GM12878 (cell line): ENCODE measurements at regions of chr11 and their contacts with region 1.

Region 1: GRCh38 chr11:65274735-65275682 is 13.2 kb downstream of the POLA2 start:
- DNase-seq: no peak
- ATAC-seq: peak; percentile 89
- H3K4me3 ChIP-seq: no peak overlapping the region
- H3K27ac ChIP-seq: no peak overlapping the region
- H3K4me1 ChIP-seq: peaks cover 6% of the 10 kb centered on the region; the same call in 1 of the 2 replicates
- H3K27me3 ChIP-seq: no peaks in the 10 kb centered on the region
- CTCF ChIP-seq: peak; percentile 68 to 94 (median 69)
- EP300 ChIP-seq: no peak
- POLR2A ChIP-seq: no peak
- RAD21 ChIP-seq: peak; percentile 90

Region 2: GRCh38 chr11:65261591-65262380 is 13.2 kb before region 1 on chr11 and contains the start of gene POLA2:
- CTCF ChIA-PET with region 1: interaction called, 30 read pairs
- POLR2A ChIA-PET with region 1: interaction called, 11 read pairs
- RAD21 ChIA-PET with region 1: interaction called, 12 read pairs
- SMC1A ChIA-PET with region 1: interaction called, 9 read pairs
- in situ Hi-C with region 1: no loop called
- intact Hi-C with region 1: no loop called
- DNase-seq: peak; percentile 92
- ATAC-seq: peak; percentile 93
- H3K4me3 ChIP-seq: peak within 1 kb of the TSS; percentile 92
- H3K27ac ChIP-seq: peak within 1 kb of the TSS; percentile 98
- H3K4me1 ChIP-seq: peaks cover 3% of the 10 kb centered on the region
- H3K27me3 ChIP-seq: no peaks in the 10 kb centered on the region
- CTCF ChIP-seq: no peak
- EP300 ChIP-seq: no peak
- POLR2A ChIP-seq: peak; percentile 94
- RAD21 ChIP-seq: no peak
- polyA plus RNA-seq, gene POLA2: 4.2 to 8.7 TPM

Region 3: DNA sequence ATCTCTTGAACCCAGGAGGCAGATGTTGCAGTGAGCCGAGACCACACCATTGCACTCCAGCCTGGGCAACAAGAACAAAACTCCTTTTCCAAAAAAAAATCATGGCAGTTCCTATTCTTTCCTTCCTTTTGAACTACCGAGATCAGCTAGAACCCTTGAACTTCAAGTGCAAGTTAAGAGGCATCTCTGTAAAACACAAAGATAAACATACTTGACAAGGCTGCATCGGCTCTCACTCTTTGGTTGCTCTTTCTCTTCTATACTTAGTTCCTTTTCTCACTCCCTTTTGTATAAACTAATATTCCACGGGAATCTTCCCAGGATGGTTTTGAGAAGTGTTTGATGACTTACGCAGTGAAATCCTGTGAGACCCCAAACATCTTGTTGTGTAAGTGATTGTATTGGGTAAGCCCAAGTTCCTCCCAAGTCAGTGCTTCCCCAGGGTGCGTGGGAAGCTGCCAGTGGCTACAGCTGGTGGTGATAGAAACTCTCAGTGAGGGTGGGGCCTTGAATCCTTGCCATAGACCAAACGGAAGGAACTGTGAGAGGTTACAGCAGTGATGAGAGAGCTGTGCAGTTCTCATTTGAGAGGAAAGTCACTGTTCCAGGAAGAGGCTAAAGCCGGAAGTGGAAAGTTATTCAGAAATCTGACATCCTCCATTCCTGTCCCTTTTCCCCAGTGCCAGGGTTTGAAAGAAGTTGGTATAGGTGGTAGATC is 15.6 kb after region 1 on chr11:
- CTCF ChIA-PET with region 1: interaction called, 67 read pairs
- POLR2A ChIA-PET with region 1: interaction called, 9 read pairs
- RAD21 ChIA-PET with region 1: interaction called, 13 read pairs
- SMC1A ChIA-PET with region 1: interaction called, 19 read pairs
- in situ Hi-C with region 1: no loop called
- intact Hi-C with region 1: no loop called
- DNase-seq: peak; percentile 69
- ATAC-seq: peak; percentile 95
- H3K4me3 ChIP-seq: no peak overlapping the region
- H3K27ac ChIP-seq: peak overlapping the region; percentile 87
- H3K4me1 ChIP-seq: peaks cover 16% of the 10 kb centered on the region
- H3K27me3 ChIP-seq: no peaks in the 10 kb centered on the region
- CTCF ChIP-seq: no peak
- EP300 ChIP-seq: no peak
- POLR2A ChIP-seq: no peak
- RAD21 ChIP-seq: no peak

Region 4: DNA sequence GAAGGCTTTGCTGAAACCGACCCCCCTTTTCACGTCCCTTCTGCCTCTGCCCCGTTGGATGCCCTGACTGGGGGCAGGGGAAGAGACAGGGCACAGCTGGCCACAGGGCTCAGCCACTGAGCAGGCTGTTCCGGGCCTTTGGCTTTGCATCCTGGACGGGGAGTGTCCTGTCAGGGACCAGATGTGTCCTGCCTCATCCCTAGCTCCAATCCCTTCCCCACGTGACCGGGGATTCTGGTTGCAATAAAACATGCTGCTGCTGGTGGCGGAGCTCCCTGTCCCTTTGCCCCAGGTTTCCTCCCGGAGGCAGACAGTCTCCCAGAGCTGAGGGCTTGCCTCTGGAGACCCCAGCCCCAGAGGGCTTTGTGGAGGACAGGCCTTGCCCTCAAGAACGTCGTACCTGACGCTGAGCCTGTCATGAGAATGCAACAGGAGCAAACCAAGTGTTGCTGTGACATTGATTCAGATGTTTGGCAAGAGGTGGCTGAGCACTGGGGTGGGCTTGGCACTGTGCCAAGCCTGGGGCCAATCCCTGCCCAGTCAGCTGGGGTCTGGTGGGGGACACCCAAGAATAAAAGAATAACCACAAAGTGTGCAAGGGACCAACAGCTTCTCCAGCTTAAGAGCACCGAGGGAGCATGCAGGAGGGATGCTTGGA is 46.9 kb after region 1 on chr11:
- CTCF ChIA-PET with region 1: interaction called, 351 read pairs
- POLR2A ChIA-PET with region 1: interaction called, 29 read pairs
- RAD21 ChIA-PET with region 1: interaction called, 254 read pairs
- SMC1A ChIA-PET with region 1: interaction called, 180 read pairs
- in situ Hi-C with region 1: no loop called
- intact Hi-C with region 1: no loop called
- DNase-seq: no peak
- ATAC-seq: no peak
- H3K4me3 ChIP-seq: no peak overlapping the region
- H3K27ac ChIP-seq: no peak overlapping the region
- H3K4me1 ChIP-seq: no peaks in the 10 kb centered on the region
- H3K27me3 ChIP-seq: no peaks in the 10 kb centered on the region
- CTCF ChIP-seq: no peak
- EP300 ChIP-seq: no peak
- POLR2A ChIP-seq: no peak
- RAD21 ChIP-seq: no peak

Region 5: DNA sequence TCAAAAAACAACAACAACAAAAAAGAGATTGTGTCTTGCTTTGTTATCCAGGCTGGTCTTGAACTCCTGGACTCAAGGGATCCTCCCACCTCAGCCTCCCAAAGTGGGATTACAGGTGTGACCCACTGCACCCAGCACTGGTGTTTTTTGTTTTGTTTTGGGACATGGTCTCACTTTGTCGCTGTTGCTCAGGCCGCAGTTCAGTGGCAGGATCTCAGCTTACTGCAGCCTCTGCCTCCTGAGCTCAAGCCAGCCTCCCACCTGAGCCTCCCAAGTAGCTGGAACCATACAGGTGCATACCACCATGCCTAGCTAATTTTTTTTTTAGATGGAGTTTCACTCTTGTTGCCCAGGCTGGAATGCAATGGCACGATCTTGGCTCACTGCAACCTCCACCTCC is 237.3 kb after region 1 on chr11:
- CTCF ChIA-PET with region 1: interaction called, 11 read pairs
- POLR2A ChIA-PET with region 1: interaction called, 4 read pairs
- RAD21 ChIA-PET with region 1: interaction called, 9 read pairs
- SMC1A ChIA-PET with region 1: interaction called, 4 read pairs
- in situ Hi-C with region 1: no loop called
- intact Hi-C with region 1: no loop called
- DNase-seq: no peak
- ATAC-seq: no peak
- H3K4me3 ChIP-seq: no peak overlapping the region
- H3K27ac ChIP-seq: no peak overlapping the region
- H3K4me1 ChIP-seq: 0 out of 2 replicates have a peak, but pooled peaks cover 3% of the 10 kb centered on the region
- H3K27me3 ChIP-seq: no peaks in the 10 kb centered on the region; a peak in 1 of 4 replicates
- CTCF ChIP-seq: no peak
- EP300 ChIP-seq: no peak
- POLR2A ChIP-seq: no peak
- RAD21 ChIP-seq: no peak